ENCODE measurements at regions of chr16 and their contacts with region 1.

Region 1: DNA sequence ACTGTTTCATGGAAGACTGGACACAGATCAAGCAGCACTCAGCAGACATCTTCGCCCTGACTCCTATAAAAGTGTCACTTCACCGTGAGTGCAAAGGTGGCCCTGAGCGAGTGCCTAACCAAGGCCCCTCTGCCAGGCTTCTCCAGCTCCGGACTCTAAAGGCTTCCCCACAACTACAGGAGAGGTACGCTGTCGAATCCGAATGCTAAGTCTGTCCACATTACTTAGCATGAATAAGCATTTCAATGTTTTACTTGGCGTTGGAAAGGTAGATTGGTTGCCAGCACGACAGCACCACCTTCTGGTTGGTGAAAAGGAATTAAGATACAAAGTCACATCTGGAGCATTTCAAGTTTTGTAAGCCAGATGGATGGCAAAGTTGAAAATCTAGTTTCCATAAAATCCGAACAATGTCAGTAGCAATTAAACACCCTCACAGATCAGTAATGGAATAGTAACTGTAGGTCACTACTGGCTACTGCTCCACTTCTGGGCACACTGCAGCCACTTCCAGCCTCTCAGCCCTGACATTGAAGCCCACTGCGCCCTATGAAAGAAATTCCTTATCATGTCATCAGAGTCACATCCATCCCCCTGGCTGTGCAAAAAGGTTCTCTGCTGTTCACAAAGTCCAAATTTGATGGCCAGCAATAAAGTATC is 100.9 kb downstream of the PARN start:
- ATAC-seq: peak; percentile 48 to 88 (median 66)
- H3K4me3 ChIP-seq: no peak overlapping the region
- H3K27ac ChIP-seq: no peak overlapping the region
- H3K4me1 ChIP-seq: peaks cover 0 to 3% of the 10 kb centered on the region in 2 donors

Region 2: GRCh38 chr16:14205666-14206065 is 323.5 kb before region 1 on chr16:
- in situ Hi-C with region 1: no loop called
- ATAC-seq: no peak
- H3K4me3 ChIP-seq: no peak overlapping the region
- H3K27ac ChIP-seq: no peak overlapping the region
- H3K4me1 ChIP-seq: no peaks in the 10 kb centered on the region

Region 3: GRCh38 chr16:14249291-14250032 is 279.7 kb before region 1 on chr16:
- in situ Hi-C with region 1: loop called in 2 of 9 experiments (anchors 10 to 25 kb)
- ATAC-seq: peak in 2 of 8 experiments; percentile 39 to 40
- H3K4me3 ChIP-seq: no peak overlapping the region
- H3K27ac ChIP-seq: no peak overlapping the region
- H3K4me1 ChIP-seq: no peaks in the 10 kb centered on the region

Region 4: GRCh38 chr16:14285513-14286385 is 243.4 kb before region 1 on chr16:
- in situ Hi-C with region 1: loop called in 1 of 9 experiments (anchors 25 kb)
- ATAC-seq: peak; percentile 83 to 94 (median 88)
- H3K4me3 ChIP-seq: peak overlapping the region; percentile 60 to 90 (median 71)
- H3K27ac ChIP-seq: peak overlapping the region; percentile 40 to 76
- H3K4me1 ChIP-seq: peaks cover 0 to 4% of the 10 kb centered on the region in 2 donors

Region 5: DNA sequence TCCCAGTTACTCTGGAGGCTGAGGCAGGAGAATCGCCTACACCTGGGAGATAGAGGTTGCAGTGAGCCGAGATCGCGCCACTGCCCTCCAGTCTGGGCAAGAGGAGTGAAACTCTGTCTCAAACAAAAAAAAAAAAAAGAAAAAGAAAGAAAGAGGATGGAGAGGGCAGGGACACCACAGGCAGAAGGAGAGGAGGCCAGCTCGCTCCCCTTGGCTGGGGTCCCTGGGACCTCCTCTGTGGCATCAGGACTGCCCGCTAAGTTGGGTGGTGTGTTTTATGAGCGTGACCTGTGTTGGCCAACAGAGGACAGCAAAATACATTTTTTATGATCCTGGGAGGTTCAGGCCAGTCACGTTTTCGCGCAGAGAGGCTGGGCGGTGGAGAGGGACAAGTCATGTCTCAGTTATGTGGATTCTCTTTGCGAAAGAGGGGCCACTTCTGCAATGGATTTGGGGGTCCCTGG is 228.4 kb before region 1 on chr16:
- in situ Hi-C with region 1: loop called in 3 of 9 experiments (anchors 25 kb)
- ATAC-seq: peak; percentile 35 to 70 (median 46)
- H3K4me3 ChIP-seq: peak overlapping the region in 2 of 5 donors; percentile 69 to 72
- H3K27ac ChIP-seq: no peak overlapping the region
- H3K4me1 ChIP-seq: peaks cover 0 to 5% of the 10 kb centered on the region in 2 donors

Region 6: GRCh38 chr16:16007743-16008111 is 1478.6 kb after region 1 on chr16:
- in situ Hi-C with region 1: no loop called
- ATAC-seq: no peak
- H3K4me3 ChIP-seq: no peak overlapping the region
- H3K27ac ChIP-seq: no peak overlapping the region
- H3K4me1 ChIP-seq: no peaks in the 10 kb centered on the region